ENCODE measurements at regions of chr3 and their contacts with region 1.

Region 1: GRCh38 chr3:110314512-110315114 is 757.0 kb upstream of the NECTIN3 start:
- DNase-seq: no peak
- ATAC-seq: peak; percentile 57

Region 2: DNA sequence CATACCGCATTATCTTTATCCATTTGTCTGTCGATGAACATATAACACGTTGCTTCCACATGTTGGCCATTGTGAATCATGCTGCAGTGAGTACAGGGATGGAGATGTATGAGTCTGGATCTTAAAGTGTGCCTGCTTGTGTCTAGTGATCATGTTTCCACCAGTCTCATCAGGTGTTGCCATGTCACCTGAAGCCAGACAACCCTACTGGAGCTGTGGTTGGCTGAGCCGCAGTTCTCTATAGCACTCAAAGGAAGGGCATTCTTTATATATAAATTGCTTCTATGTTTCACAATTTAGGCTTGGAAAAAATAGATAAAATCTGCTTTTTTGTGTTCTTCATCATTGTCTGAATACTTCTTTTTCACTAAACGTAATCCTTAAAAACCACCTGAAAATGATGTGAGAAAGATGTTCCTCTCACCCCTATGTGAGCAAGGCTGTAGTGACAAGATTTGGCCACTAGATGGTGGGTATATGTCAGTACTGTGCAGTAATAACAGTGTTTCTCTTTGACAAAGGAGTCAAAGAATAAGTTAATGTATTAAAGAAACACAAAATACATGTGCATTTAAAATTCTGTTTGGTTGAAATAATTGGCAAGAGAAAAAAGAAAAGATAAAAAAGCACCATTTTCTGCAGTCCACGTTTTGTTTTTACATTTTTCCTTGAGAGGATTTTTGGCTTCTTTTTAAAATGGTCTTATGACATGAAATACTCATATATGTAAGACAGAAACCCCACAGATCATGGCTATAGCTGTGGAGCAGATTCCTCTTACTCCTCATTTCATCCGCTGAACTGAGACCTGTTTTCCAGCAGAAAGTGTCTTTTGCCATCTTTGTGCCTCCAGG is 582.8 kb before region 1 on chr3:
- intact Hi-C with region 1: loop called (anchors 2 kb)
- DNase-seq: no peak
- ATAC-seq: no peak

Region 3: DNA sequence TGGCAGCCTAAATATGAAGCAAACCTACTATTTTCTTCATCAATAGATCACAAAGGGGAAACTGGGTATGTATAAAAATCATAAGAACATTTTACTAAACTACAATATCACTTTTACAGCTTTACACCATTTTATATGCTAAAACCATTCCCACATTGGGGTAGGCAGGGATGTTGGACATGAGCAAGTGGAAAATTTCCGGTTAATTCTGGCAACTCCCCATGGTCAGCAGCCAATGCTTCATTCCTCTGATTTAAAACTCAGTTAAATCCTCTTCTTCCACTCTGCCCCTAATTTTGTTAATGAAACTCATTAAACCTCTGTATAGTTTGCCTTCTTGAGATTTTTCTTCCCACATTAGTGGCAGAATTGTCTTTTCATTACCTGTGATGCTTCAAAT is 204.5 kb after region 1 on chr3:
- intact Hi-C with region 1: no loop called
- DNase-seq: no peak
- ATAC-seq: no peak

Measured in Right ventricle myocardium inferior (tissue), 1 donor.